H1 (cell line): ENCODE measurements at regions of chr6 and their contacts with region 1.

Region 1: DNA sequence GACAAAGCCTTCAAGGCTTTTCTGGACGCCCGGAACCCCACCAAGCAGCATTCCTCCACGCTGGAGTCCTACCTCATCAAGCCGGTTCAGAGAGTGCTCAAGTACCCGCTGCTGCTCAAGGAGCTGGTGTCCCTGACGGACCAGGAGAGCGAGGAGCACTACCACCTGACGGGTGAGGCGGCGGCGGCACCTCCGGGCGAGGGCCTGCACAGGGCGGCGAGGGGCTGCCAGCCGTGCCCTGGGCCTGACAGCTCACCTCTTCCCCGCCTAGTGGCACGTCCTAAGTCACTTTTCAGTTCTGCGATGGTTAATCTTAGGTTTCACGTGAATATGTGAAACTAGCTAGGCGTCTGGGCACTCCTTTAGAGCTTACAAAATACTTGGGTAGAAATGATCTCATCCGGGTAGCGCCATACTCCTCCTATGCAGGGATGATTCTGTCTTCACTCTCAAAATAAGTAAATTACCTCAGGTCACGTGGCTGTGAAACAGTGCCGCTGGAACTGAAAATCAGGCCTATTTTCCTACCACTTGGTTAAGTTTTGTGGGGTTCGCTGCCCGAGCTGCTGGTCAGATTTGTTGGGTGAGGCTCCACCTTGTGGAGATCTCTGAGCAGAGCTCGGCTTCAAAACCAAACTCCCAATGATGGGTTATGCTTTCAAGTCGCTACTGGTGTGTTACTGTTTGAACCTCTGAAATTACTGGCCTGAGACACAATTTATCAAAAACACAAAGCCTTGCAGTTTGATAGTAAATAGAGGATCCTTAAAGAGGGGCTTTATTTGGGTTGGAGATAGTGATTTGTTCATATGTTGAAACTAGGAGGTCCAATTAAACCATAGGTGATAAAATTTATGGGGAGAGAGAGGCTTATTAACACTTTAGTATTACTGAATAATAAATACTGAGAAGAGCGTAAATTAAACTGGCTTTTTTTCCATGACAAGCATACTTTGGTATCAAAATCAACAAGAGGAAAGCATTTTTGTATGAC is 15.5 kb upstream of the CLDN20 start:
- DNase-seq: peak in 1 of 2 experiments; percentile 67
- H3K4me3 ChIP-seq: no peak overlapping the region
- H3K27ac ChIP-seq: no peak overlapping the region
- H3K4me1 ChIP-seq: 0 out of 7 replicates have a peak, but pooled peaks cover 0 to 3% (median 0%) of the 10 kb centered on the region in 4 experiments
- H3K27me3 ChIP-seq: no peaks in the 10 kb centered on the region
- CTCF ChIP-seq: peak; percentile 71 to 91 (median 82)
- EP300 ChIP-seq: no peak
- POLR2A ChIP-seq: no peak
- RAD21 ChIP-seq: peak; percentile 86 to 90

Region 2: GRCh38 chr6:154868143-154868594 is 380.1 kb before region 1 on chr6:
- CTCF ChIA-PET with region 1: interaction called, 14 read pairs
- POLR2A ChIA-PET with region 1: no interaction called
- DNase-seq: no peak
- H3K4me3 ChIP-seq: no peak overlapping the region
- H3K27ac ChIP-seq: no peak overlapping the region
- H3K4me1 ChIP-seq: peaks cover 0 to 7% (median 5%) of the 10 kb centered on the region in 4 experiments; a peak in 3 of 7 replicates
- H3K27me3 ChIP-seq: no peaks in the 10 kb centered on the region
- CTCF ChIP-seq: peak in 2 of 3 experiments; percentile 56 to 69; a peak in 2 of 4 replicates
- EP300 ChIP-seq: no peak
- POLR2A ChIP-seq: no peak
- RAD21 ChIP-seq: peak; percentile 83 to 89

Region 3: DNA sequence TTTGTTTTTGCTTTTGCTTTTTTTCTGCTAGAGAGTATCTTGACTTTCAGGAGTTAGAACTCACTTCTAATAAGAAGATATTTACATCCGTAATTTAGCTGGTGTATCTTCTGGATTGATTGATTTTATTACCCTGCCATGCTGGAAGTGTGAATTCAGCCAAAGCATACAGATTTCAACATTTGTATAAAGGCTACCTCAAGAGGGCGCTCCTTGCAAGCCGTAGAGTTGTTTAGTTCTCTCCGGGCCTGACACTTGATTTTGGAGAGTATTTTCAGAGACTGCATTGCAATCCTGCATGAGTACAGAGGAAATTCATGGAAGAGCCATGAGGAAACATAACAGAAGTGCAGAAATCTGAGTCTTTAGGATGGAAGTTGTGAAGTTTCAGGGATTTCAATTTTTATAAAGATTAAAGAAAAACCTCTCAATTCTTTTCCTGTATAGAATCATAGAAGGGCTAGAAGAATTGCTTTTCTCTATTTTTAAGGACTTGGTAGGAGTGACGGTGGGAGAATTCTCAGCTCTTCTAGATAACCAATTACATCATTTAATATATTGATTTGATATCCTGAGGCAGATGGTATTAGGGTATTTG is 319.9 kb before region 1 on chr6:
- CTCF ChIA-PET with region 1: interaction called, 98 read pairs
- POLR2A ChIA-PET with region 1: no interaction called
- DNase-seq: peak in 1 of 2 experiments; percentile 77
- H3K4me3 ChIP-seq: no peak overlapping the region
- H3K27ac ChIP-seq: no peak overlapping the region
- H3K4me1 ChIP-seq: peaks cover 5 to 17% (median 7%) of the 10 kb centered on the region in 4 experiments
- H3K27me3 ChIP-seq: no peaks in the 10 kb centered on the region
- CTCF ChIP-seq: peak; percentile 1 to 87 (median 79)
- EP300 ChIP-seq: no peak
- POLR2A ChIP-seq: no peak
- RAD21 ChIP-seq: peak; percentile 97 to 98

Region 4: DNA sequence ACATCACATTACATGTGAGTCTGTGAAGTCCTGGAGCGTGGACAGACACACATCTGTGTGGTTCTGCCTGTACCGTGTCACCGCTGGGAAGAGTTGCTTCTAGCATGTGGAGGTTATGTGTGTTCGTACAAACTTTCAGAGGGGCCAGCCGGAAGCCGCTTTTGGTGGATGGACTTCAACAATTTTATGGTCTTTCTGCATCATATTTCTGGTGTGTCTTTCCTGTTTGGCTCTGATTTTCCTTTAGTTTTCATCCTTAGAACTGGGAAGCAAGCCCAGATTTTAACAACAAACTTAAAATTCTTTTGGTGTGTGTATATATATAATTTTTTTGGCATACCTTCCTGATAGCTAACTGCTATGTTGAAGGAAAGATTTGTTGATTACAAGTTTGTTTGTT is 181.9 kb before region 1 on chr6:
- CTCF ChIA-PET with region 1: no interaction called
- POLR2A ChIA-PET with region 1: no interaction called
- DNase-seq: no peak
- H3K4me3 ChIP-seq: no peak overlapping the region
- H3K27ac ChIP-seq: no peak overlapping the region
- H3K4me1 ChIP-seq: peaks cover 0 to 5% (median 0%) of the 10 kb centered on the region in 4 experiments; a peak in 2 of 7 replicates
- H3K27me3 ChIP-seq: no peaks in the 10 kb centered on the region
- CTCF ChIP-seq: no peak
- EP300 ChIP-seq: no peak
- POLR2A ChIP-seq: no peak
- RAD21 ChIP-seq: no peak

Region 5: GRCh38 chr6:155196911-155197310 is 51.4 kb before region 1 on chr6:
- CTCF ChIA-PET with region 1: interaction called, 11 read pairs
- POLR2A ChIA-PET with region 1: no interaction called
- DNase-seq: no peak
- H3K4me3 ChIP-seq: no peak overlapping the region
- H3K27ac ChIP-seq: no peak overlapping the region
- H3K4me1 ChIP-seq: no peaks in the 10 kb centered on the region
- H3K27me3 ChIP-seq: no peaks in the 10 kb centered on the region
- CTCF ChIP-seq: no peak
- EP300 ChIP-seq: no peak
- POLR2A ChIP-seq: no peak
- RAD21 ChIP-seq: no peak

Region 6: GRCh38 chr6:155207223-155207622 is 41.1 kb before region 1 on chr6:
- CTCF ChIA-PET with region 1: interaction called, 19 read pairs
- POLR2A ChIA-PET with region 1: no interaction called
- DNase-seq: no peak
- H3K4me3 ChIP-seq: no peak overlapping the region
- H3K27ac ChIP-seq: no peak overlapping the region
- H3K4me1 ChIP-seq: peaks cover 0 to 4% (median 0%) of the 10 kb centered on the region in 4 experiments; a peak in 1 of 7 replicates
- H3K27me3 ChIP-seq: no peaks in the 10 kb centered on the region
- CTCF ChIP-seq: no peak
- EP300 ChIP-seq: no peak
- POLR2A ChIP-seq: no peak
- RAD21 ChIP-seq: no peak

Region 7: DNA sequence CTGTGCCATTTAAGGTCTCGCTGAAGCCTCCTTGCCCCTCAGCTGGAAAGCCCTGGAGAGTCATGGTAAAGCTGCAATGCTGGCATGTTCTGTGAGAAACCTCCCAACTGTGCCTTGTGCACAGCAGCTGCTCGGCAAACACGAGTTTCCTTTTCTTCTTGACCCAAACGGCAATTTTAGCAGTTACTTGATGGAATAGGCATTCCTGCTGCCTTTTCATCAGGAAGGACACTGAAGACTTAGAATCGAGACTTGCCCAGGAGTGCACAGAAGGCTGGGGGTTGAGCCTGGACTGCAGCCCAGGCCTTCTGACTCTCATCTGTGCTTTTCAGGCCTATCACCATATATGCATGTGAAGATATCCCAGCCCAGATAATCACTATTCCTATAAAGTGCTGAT is 13.2 kb before region 1 on chr6:
- CTCF ChIA-PET with region 1: interaction called, 48 read pairs
- POLR2A ChIA-PET with region 1: interaction called, 6 read pairs
- DNase-seq: no peak
- H3K4me3 ChIP-seq: no peak overlapping the region
- H3K27ac ChIP-seq: no peak overlapping the region
- H3K4me1 ChIP-seq: peaks cover 0 to 4% (median 0%) of the 10 kb centered on the region in 4 experiments; a peak in 2 of 7 replicates
- H3K27me3 ChIP-seq: no peaks in the 10 kb centered on the region
- CTCF ChIP-seq: no peak
- EP300 ChIP-seq: no peak
- POLR2A ChIP-seq: no peak
- RAD21 ChIP-seq: no peak

Region 8: DNA sequence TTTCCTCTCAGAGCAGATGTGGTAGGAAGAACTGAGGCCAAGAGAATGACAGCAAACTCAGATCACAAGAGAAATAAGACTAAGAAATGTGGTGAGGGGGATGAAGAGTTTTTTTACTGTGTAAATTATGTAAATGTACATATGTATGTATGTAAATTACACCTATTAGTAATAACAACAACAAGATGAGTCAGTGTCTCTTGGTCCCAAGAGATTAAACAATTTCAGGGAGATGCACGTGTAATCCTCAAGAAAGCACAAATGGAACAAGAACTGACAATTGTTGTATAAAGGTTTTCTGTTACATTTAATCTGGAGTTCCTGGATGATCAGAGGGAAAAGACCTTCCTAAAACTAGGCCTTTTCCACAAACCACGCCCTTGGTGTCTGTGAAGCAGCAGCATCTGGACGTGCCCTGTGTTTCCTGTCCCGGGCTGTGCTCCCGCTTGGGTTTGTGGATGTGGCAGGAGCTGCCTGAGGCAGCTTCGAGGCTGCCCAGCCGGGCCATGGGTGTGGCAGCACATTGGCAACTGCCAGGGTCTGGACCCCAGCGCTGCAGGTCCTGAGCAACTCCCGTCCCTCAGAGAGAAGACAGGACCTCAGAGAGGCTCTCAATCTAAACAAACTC is 16.5 kb after region 1 on chr6:
- CTCF ChIA-PET with region 1: interaction called, 72 read pairs
- POLR2A ChIA-PET with region 1: interaction called, 3 read pairs
- DNase-seq: no peak
- H3K4me3 ChIP-seq: no peak overlapping the region
- H3K27ac ChIP-seq: no peak overlapping the region
- H3K4me1 ChIP-seq: peaks cover 0 to 7% (median 4%) of the 10 kb centered on the region in 4 experiments; a peak in 4 of 7 replicates
- H3K27me3 ChIP-seq: no peaks in the 10 kb centered on the region
- CTCF ChIP-seq: no peak
- EP300 ChIP-seq: no peak
- POLR2A ChIP-seq: no peak
- RAD21 ChIP-seq: no peak